ENCODE measurements at regions of chr16 and their contacts with region 1.

Region 1: DNA sequence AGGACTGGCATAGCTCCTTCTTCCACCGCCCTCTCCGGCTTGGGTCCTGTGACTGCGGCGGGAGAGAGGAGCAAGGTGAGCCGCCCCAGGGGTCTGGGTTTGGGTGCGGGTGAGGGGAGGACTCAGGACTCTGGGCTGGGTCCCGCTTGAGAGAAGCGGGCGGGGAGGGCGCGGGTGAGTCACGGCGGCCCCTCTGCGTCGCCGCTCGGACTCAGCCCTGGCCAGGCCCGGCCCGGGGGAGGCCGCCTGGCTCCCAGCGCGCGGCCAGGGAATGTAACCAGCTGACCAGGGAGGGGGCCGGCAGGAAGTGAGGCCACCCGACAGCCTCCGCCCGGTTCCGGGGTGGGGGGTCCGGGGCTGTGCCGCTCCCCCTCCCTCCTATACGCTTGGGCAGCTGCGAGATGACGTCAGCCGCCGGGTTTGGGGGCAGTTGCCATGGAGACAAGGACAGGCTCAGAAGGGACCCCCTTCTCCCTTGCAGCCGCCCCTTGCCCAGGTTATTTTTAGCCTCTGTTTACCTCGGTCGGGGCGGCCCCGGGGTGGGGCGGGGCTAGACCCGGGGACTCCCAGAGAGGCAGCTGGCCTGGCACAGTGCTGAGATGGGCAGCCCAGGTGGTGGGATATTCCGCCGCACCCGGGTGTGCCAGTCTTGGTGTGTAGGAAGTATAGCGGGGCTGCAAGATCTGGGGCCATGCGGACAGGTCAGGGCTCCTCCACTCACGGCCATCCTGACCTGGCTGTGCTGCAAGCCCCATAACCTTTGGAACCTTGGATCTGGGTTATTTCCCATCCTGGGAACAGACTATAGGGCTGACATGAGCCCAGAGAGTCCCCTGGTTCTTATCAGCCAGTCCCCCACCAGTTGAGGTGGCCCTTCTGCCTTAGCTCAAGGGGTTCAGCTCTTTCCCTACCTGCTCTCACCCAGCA is 1.6 kb downstream of the RIPOR1 start:
- DNase-seq: peak; percentile 81
- CTCF ChIP-seq: no peak

Region 2: DNA sequence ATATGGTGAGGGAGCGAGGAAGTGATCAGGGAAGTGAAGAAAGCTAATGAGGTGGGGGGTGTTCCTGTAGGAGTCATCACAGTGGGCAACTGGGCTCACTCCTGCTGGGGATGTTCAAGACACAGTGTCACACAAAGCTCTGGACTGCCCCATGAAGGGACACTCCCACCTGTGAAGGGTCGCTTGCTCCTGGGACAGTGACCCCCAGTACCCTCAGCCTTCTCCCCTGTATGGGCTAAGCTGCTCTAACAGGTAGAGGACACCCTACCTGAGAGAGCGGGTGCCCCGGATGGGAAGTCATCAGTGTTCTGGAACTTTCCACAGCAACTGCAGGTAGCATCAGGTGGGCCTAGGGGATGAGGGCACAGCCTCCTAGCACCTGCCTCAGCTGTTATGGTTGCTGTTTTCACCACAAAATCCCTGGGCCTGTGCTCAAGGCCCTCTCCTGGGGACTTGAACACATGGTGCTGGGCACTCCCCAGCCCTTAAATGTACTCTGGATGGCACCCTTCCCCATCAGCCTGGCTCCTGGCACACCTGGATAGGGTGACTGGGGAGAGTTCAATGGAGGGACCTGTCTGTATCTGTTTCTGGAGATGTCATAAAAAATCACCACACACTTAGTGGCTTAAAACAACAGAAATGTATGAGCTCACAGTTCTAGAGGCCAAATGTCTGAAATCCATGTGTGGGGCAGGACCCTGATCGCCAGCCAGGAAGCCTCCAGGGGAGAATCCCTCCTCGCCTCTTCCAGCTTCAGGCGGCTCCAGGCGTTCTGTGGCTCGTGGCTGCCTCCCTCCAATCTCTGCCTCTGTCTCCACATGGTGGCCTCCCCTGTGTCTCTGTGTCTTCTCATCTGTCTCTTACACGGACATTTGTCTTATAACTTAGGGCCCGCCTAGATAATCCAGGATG is 1267.8 kb before region 1 on chr16:
- in situ Hi-C with region 1: no loop called
- DNase-seq: no peak
- CTCF ChIP-seq: no peak

Region 3: GRCh38 chr16:67296422-67296821 is 233.9 kb before region 1 on chr16:
- in situ Hi-C with region 1: no loop called
- DNase-seq: no peak
- CTCF ChIP-seq: no peak

Region 4: DNA sequence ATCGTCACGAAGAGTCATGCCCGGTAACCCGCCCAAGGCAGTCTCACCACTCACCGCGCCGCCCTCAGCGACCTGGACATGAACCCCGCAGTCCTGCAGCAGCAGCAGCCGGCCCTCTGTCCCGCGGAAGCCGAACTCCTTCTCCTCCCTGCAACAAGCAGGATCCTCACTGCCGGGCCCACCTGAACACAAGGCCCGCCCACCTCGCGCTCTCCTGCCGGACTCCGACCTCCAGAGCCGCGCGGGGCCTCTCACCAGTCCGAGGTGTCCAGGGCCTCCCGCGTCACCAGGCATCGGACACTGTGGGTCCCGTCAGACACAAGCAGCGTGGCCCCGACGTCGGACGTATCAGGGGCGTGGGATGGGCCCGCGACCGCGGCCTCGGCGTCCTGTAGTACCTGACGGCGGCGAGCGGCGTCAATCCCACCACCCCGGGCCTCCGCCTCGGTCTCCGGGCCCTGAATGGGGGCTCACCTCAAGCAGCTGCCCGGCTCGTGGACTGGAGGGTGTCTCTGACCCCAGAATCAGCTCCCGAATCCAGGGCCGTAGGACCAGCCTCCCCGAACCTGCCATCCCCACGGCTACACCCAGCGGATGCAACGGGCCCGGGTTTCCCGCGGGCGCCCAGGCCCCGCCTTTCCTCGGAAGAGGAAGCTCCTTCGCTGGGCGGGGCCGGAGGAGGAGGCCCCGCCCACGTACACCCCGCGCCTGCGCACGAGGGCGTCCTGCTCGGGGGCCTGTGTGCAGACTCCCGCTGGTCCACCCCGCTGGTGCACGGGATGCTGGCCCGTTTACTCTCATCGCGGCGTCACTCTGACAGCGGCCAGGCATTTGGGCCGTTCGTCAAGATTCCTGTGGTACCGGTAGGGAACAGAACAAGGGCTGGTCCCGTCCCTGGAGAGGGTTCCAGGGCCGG is 129.6 kb after region 1 on chr16 and contains the start of gene ACD:
- in situ Hi-C with region 1: loop called (anchors 10 kb)
- DNase-seq: peak; percentile 100
- CTCF ChIP-seq: no peak